Dorsolateral prefrontal cortex (tissue), 120 donors: ENCODE measurements at regions of chr21 and their contacts with region 1.

Region 1: DNA sequence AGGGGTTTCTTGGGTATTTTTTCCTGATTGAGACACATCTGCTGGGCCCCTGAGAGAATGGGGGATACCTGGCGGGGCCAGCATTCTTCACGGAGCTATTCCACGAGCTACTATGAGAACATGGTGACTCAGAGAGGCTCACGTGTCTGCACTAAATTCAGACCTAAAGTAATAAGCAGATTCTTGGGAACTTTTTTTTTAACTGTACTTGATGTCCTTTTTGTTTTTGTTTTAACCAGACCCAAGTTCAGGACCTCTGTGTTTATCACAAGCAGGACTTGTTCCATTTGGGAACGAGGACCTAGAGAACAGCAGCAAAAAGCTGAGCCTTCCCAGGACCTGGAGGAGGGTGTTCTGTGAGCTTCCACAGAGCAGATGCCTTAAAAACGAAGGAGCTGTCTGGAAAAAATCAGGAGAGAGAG is 44.0 kb downstream of the EVA1C start:
- DNase-seq: peak in 1 of 10 donors; percentile 16
- H3K4me3 ChIP-seq: no peak overlapping the region
- H3K27ac ChIP-seq: peak overlapping the region in 52 of 59 donors; percentile 5 to 83 (median 66)
- H3K27me3 ChIP-seq: no peaks in the 10 kb centered on the region
- CTCF ChIP-seq: no peak

Region 2: DNA sequence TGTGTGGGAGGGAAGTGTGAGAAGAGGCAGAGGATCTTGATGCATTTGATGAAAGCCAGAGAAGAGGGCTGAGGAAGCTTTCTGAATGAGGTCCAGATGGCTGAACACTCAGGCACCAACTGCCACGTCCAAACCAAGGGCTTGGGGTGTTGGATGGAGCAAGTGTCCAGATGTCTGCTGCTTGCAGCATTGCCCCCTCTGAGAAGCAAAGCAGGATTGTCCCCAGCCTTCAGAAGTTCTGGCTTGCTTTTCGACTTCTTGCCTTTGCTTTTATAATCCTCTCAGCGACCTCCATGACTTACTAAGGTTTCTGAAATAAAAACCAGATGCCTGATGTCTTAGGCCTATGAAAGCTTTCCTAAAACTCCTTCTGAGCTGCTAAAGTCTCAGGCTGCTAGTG is 401.2 kb before region 1 on chr21:
- intact Hi-C with region 1: no loop called
- DNase-seq: no peak
- H3K4me3 ChIP-seq: no peak overlapping the region
- H3K27ac ChIP-seq: no peak overlapping the region
- H3K27me3 ChIP-seq: no peaks in the 10 kb centered on the region
- CTCF ChIP-seq: no peak

Region 3: GRCh38 chr21:32470206-32470605 is 13.7 kb after region 1 on chr21:
- intact Hi-C with region 1: loop called in 1 of 2 experiments (anchors 1 kb)
- DNase-seq: peak in 1 of 10 donors; percentile 26
- H3K4me3 ChIP-seq: no peak overlapping the region
- H3K27ac ChIP-seq: no peak overlapping the region
- H3K27me3 ChIP-seq: no peaks in the 10 kb centered on the region
- CTCF ChIP-seq: no peak